Activated CD8-positive, alpha-beta T cell treated with anti-CD3 and anti-CD28 coated beads for 36 hours (primary cell): ENCODE measurements at regions of chr3 and their contacts with region 1.

Region 1: DNA sequence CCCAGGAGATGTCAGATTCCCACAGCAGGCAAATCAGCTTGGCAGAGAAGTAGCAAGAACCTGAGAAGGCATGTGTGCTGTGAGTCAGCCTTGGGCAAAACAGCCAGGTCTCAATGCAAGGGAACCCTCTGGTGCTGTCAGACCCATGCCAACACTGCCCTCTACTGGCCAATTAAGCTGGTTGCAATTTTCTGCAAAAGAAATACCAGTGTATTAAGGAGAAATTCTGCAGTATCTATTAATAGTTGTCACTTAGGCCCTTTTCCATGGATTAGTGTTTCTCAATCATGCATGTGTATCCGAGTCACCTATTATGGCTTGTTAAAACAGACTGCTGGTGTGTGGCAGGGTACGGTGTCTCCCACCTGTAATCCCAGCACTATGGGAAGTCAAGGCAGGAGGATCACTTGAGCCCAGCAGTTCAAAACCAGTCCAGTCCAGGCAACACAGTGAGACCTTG is 26.2 kb downstream of the MAP4 start:
- DNase-seq: peak; percentile 83
- ATAC-seq: peak; percentile 98
- H3K4me3 Mint-ChIP-seq: no peak overlapping the region
- H3K27ac Mint-ChIP-seq: no peak overlapping the region
- H3K4me1 Mint-ChIP-seq: peaks cover 4% of the 10 kb centered on the region
- H3K27me3 Mint-ChIP-seq: no peaks in the 10 kb centered on the region
- CTCF ChIP-seq: peak; percentile 80

Region 2: GRCh38 chr3:47824541-47825473 is 165.2 kb before region 1 on chr3:
- CTCF ChIA-PET with region 1: interaction called, 23 read pairs
- POLR2A ChIA-PET with region 1: no interaction called
- intact Hi-C with region 1: no loop called
- DNase-seq: peak; percentile 80
- ATAC-seq: peak; percentile 98
- H3K4me3 Mint-ChIP-seq: peak overlapping the region; percentile 92
- H3K27ac Mint-ChIP-seq: peak overlapping the region; percentile 95
- H3K4me1 Mint-ChIP-seq: peaks cover 28% of the 10 kb centered on the region
- H3K27me3 Mint-ChIP-seq: no peaks in the 10 kb centered on the region
- CTCF ChIP-seq: peak; percentile 82

Region 3: DNA sequence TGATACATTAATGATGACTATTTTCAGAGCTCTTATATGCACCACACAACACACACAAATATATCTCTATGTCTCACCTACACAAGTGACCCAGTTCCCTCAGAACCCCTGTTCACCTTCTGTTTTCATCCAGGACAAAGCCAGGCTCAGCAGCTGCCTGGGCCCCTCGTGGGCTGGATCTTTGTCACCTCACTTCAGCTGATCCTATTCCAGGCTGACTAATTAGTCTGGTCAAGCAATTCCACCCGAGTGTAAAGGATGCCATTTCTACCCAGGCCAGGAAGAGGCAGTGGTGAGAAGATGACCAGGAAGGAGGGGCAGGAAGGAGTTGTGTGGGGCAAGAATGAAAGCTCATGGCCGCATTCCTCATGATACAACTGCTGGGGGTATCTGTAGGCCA is 124.8 kb before region 1 on chr3:
- CTCF ChIA-PET with region 1: interaction called, 4 read pairs
- POLR2A ChIA-PET with region 1: no interaction called
- intact Hi-C with region 1: loop called (anchors 10 kb)
- DNase-seq: no peak
- ATAC-seq: no peak
- H3K4me3 Mint-ChIP-seq: no peak overlapping the region
- H3K27ac Mint-ChIP-seq: no peak overlapping the region
- H3K4me1 Mint-ChIP-seq: no peaks in the 10 kb centered on the region
- H3K27me3 Mint-ChIP-seq: no peaks in the 10 kb centered on the region
- CTCF ChIP-seq: no peak

Region 4: DNA sequence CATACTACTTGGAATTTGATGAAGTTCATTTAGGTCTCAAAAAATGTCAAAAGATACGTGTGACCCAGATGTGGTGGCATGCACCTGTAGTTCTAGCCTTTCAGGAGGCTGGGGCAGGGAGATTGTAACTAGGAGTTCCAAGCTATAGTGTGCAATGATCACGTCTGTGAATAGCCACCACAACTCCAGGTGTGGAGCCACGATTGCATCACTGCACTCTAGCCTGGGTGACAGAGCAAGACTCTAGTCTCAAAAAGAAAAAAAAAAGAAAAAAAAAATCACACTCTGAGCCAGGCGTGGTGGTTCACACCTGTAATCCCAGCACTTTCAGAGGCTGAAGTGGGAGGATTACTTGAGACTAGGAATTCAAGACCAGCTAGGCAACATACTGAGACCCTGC is 12.0 kb after region 1 on chr3:
- CTCF ChIA-PET with region 1: interaction called, 27 read pairs
- POLR2A ChIA-PET with region 1: no interaction called
- intact Hi-C with region 1: no loop called
- DNase-seq: peak; percentile 11
- ATAC-seq: no peak
- H3K4me3 Mint-ChIP-seq: no peak overlapping the region
- H3K27ac Mint-ChIP-seq: no peak overlapping the region
- H3K4me1 Mint-ChIP-seq: no peaks in the 10 kb centered on the region
- H3K27me3 Mint-ChIP-seq: no peaks in the 10 kb centered on the region
- CTCF ChIP-seq: no peak

Region 5: GRCh38 chr3:48151058-48151806 is 161.2 kb after region 1 on chr3:
- CTCF ChIA-PET with region 1: interaction called, 13 read pairs
- POLR2A ChIA-PET with region 1: no interaction called
- intact Hi-C with region 1: loop called (anchors 10 kb)
- DNase-seq: peak; percentile 77
- ATAC-seq: peak; percentile 98
- H3K4me3 Mint-ChIP-seq: no peak overlapping the region
- H3K27ac Mint-ChIP-seq: no peak overlapping the region
- H3K4me1 Mint-ChIP-seq: no peaks in the 10 kb centered on the region
- H3K27me3 Mint-ChIP-seq: no peaks in the 10 kb centered on the region
- CTCF ChIP-seq: peak; percentile 69